ENCODE measurements at regions of chr2 and their contacts with region 1.

Region 1: DNA sequence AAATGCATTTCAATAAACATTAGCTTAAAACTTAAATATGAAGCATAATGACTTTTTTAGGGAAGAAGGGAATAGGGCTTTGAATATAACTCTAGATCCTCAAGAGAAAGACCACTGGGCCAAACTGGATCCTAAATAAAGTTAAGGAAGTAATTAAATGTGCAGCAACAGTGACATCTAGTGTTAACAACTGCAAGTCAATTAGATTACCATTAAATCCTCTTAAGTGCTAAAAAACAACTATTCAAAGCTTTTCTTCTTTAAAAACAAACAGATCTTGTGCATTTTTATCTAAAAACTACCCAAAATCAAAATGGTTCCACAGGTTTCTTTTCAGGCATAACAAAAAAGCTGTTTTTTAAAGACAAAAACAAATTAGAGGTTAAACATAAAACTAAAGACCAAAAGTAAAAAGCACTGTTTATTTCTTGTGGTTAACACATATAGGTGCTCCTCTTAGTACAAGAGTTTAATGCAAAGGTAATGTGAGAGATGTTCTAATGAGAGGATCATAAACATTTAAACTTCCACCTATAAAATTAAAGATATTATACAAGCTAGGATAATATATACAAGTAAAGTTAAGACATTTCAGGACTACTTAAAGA is 111.4 kb downstream of the THADA start:
- DNase-seq: no peak
- ATAC-seq: peak; percentile 42
- H3K4me3 Mint-ChIP-seq: no peak overlapping the region
- H3K27ac Mint-ChIP-seq: no peak overlapping the region
- H3K4me1 Mint-ChIP-seq: peaks cover 2% of the 10 kb centered on the region
- H3K27me3 Mint-ChIP-seq: no peaks in the 10 kb centered on the region

Region 2: GRCh38 chr2:42828487-42829425 is 655.7 kb before region 1 on chr2:
- CTCF ChIA-PET with region 1: interaction called, 4 read pairs
- POLR2A ChIA-PET with region 1: no interaction called
- intact Hi-C with region 1: loop called in 1 of 2 experiments (anchors 1 kb)
- DNase-seq: peak; percentile 84
- ATAC-seq: peak; percentile 92
- H3K4me3 Mint-ChIP-seq: no peak overlapping the region
- H3K27ac Mint-ChIP-seq: no peak overlapping the region
- H3K4me1 Mint-ChIP-seq: peaks cover 10% of the 10 kb centered on the region
- H3K27me3 Mint-ChIP-seq: no peaks in the 10 kb centered on the region

Region 3: DNA sequence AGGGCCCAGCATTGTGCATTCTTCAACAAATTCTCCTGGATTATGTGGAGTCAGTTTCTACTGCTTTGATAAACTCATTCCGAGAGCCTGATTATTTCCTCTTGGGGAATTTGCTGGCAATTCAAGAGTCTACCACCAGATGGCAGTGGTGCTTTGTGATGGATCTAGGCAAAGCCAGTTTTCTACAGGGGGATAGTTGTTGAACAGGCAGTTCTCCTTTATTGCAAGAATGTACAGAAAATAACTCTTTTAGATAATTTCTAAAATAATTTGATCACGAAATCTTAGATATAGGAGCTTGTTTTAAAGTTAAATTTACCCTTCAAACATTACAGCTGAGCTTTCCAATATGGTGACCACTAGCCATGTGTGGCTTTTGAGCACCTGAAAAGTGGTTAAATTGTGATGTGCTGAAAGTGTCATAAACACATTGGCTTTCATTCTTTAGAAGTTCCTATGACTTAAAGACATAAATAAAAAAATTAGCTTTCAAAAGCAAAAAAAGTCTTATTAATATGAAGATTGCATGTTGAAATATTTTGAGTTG is 625.3 kb before region 1 on chr2:
- CTCF ChIA-PET with region 1: interaction called, 9 read pairs
- POLR2A ChIA-PET with region 1: no interaction called
- intact Hi-C with region 1: loop called in 1 of 2 experiments (anchors 2 kb)
- DNase-seq: peak; percentile 86
- ATAC-seq: peak; percentile 69
- H3K4me3 Mint-ChIP-seq: no peak overlapping the region
- H3K27ac Mint-ChIP-seq: no peak overlapping the region
- H3K4me1 Mint-ChIP-seq: peaks cover 5% of the 10 kb centered on the region
- H3K27me3 Mint-ChIP-seq: no peaks in the 10 kb centered on the region

Region 4: GRCh38 chr2:42974721-42975717 is 509.4 kb before region 1 on chr2:
- CTCF ChIA-PET with region 1: interaction called, 4 read pairs
- POLR2A ChIA-PET with region 1: no interaction called
- intact Hi-C with region 1: loop called in 1 of 2 experiments (anchors 1 kb)
- DNase-seq: peak; percentile 67
- ATAC-seq: peak; percentile 43
- H3K4me3 Mint-ChIP-seq: no peak overlapping the region
- H3K27ac Mint-ChIP-seq: no peak overlapping the region
- H3K4me1 Mint-ChIP-seq: peaks cover 13% of the 10 kb centered on the region
- H3K27me3 Mint-ChIP-seq: no peaks in the 10 kb centered on the region

Region 5: DNA sequence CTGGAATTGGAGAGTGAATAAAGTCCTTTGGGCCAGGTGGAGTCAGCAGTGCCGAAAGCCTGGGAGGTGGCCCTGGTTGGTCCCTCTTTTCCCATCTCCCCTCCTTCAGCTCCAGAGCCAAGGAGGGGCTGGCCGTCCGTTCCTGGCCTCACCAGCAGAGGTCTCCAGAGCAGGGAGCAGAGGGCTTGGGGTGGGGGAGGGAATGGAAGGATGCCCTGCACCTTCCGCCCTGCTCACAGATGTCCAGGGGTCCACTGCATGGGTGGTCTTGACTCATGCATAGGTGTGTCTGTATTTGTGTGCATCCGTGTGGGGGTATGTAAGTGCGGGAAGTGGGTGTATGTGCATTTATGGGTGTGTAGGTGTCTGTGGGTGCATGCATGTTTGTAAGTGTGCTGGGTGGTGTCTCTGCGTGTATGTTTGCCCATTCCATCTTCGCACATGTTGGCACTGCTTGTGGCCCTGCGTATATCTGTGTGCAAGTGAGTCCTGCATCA is 459.9 kb before region 1 on chr2:
- CTCF ChIA-PET with region 1: interaction called, 4 read pairs
- POLR2A ChIA-PET with region 1: no interaction called
- intact Hi-C with region 1: loop called in 1 of 2 experiments (anchors 5 kb)
- DNase-seq: peak; percentile 72
- ATAC-seq: peak; percentile 64
- H3K4me3 Mint-ChIP-seq: no peak overlapping the region
- H3K27ac Mint-ChIP-seq: no peak overlapping the region
- H3K4me1 Mint-ChIP-seq: peaks cover 14% of the 10 kb centered on the region
- H3K27me3 Mint-ChIP-seq: no peaks in the 10 kb centered on the region

Region 6: DNA sequence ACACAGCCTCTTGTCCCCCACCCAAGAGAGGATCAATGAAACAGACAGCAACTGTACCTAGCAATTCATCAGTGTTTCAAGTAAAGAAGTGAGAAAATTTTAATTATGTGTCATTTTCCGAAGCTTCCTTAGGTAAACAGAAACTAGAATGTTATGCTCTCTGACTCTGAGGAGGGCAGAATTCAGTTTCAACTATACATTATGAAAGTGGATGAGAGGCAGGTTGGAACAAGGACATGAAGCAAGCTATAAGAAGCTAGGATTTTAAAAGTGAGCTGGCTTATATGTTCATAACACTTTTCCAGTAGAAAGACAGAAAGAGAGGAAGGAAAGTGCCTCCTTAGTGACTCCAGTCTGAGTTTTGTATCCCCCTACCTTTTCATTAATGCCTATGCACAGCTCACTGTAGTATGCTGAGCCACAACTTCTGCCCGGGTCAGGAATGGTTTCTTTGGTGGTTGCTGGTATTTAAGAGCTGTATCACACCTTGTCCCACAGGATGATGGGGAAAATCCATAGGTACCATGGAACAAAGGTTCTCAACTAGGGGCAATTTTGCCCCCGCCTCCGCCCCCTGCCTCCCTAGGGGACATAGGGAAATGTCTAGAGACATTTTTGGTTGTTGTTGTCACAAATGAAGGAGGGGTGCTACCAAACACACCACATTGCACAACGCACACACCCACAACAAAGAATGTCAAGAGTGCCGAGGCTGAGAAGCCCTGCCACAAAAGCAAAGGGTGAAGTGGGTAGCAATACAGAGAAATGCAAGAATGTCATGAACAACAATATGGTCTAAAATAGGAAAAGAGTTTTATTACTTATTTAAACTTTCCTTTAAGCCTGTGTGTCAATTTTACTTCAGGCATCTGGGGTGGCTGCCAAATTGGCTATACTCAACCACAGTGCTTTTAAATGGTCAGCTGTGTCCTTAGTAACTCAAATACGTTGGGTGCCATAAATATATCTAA is 97.0 kb before region 1 on chr2:
- CTCF ChIA-PET with region 1: interaction called, 12 read pairs
- POLR2A ChIA-PET with region 1: no interaction called
- intact Hi-C with region 1: loop called in 1 of 2 experiments (anchors 5 kb)
- DNase-seq: peak; percentile 12
- ATAC-seq: peak; percentile 90
- H3K4me3 Mint-ChIP-seq: no peak overlapping the region
- H3K27ac Mint-ChIP-seq: peak overlapping the region; percentile 11
- H3K4me1 Mint-ChIP-seq: peaks cover 19% of the 10 kb centered on the region
- H3K27me3 Mint-ChIP-seq: no peaks in the 10 kb centered on the region

Region 7: DNA sequence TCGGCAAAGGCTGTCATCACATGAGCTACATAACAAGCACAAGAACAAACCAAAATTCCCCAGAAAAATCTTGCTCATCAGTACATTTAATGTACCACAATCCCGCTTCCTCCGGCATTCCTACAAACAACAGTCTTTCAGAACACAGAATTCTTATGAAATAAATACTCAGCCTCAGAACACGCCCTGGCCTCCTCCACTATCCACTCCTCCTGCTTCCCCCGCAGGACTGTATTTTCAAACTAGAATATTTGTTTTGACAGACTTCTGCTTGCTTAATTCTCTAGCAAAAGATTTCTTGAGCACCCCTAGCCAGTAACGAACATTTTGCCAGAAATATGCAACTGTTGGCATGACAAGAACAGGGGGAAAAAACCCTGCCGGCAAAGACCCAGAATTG is 19.8 kb before region 1 on chr2:
- CTCF ChIA-PET with region 1: interaction called, 11 read pairs
- POLR2A ChIA-PET with region 1: no interaction called
- intact Hi-C with region 1: no loop called
- DNase-seq: no peak
- ATAC-seq: no peak
- H3K4me3 Mint-ChIP-seq: no peak overlapping the region
- H3K27ac Mint-ChIP-seq: no peak overlapping the region
- H3K4me1 Mint-ChIP-seq: peaks cover 2% of the 10 kb centered on the region
- H3K27me3 Mint-ChIP-seq: no peaks in the 10 kb centered on the region

Region 8: GRCh38 chr2:45040786-45041185 is 1556.4 kb after region 1 on chr2:
- CTCF ChIA-PET with region 1: no interaction called
- POLR2A ChIA-PET with region 1: no interaction called
- intact Hi-C with region 1: no loop called
- DNase-seq: no peak
- ATAC-seq: no peak
- H3K4me3 Mint-ChIP-seq: no peak overlapping the region
- H3K27ac Mint-ChIP-seq: no peak overlapping the region
- H3K4me1 Mint-ChIP-seq: no peaks in the 10 kb centered on the region
- H3K27me3 Mint-ChIP-seq: peaks cover 13% of the 10 kb centered on the region

Measured in activated CD4-positive, alpha-beta T cell treated with anti-CD3 and anti-CD28 coated beads for 36 hours (primary cell).